Heart left ventricle (tissue), 16 donors: ENCODE measurements at regions of chr20 and their contacts with region 1.

Region 1: GRCh38 chr20:61588411-61589386 is 336.6 kb downstream of the CDH4 start:
- DNase-seq: peak in 1 of 5 donors; percentile 19
- ATAC-seq: no peak
- H3K4me3 ChIP-seq: no peak overlapping the region
- H3K27ac ChIP-seq: no peak overlapping the region
- H3K4me1 ChIP-seq: peaks cover 0 to 10% (median 0%) of the 10 kb centered on the region in 12 donors
- H3K27me3 ChIP-seq: peaks cover 0 to 21% (median 3%) of the 10 kb centered on the region in 9 donors
- CTCF ChIP-seq: no peak
- POLR2A ChIP-seq: no peak

Region 2: GRCh38 chr20:60167812-60168211 is 1420.9 kb before region 1 on chr20:
- intact Hi-C with region 1: no loop called
- DNase-seq: no peak
- ATAC-seq: no peak
- H3K4me3 ChIP-seq: no peak overlapping the region
- H3K27ac ChIP-seq: no peak overlapping the region
- H3K4me1 ChIP-seq: peaks cover 0 to 6% (median 0%) of the 10 kb centered on the region in 12 donors
- H3K27me3 ChIP-seq: no peaks in the 10 kb centered on the region
- CTCF ChIP-seq: no peak
- POLR2A ChIP-seq: no peak

Region 3: DNA sequence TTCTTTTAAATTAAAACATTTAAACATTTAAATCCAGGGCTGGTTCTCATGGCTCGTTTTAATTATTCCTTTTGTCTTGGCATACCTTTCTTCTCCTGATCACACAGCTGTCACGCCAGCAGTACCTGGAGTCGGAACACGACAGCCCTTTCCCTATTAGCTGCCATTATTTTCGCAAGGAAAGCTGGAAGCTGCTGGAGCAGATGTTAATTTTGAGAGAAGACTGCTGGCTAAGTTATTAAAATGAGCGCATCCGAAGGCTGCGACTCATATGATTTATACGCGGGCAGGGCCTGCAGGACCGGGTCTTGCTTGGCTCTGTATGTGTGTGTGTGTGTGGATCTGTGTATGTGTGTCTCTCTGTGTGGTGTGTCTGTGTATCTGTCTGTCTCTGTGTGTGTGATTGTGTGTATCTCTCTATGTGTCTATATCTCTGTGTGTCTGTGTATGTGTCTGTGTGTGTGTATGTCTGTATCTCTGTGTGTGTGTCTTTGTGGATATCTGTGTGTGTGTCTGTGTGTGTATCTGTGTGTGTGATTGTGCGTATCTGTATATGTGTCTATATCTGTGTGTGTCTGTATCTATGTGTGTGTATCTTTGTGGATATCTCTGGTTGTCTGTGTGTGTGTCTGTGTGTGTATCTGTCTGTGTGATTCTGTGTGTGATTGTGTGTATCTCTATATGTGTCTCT is 145.1 kb before region 1 on chr20:
- intact Hi-C with region 1: no loop called
- DNase-seq: no peak
- ATAC-seq: no peak
- H3K4me3 ChIP-seq: no peak overlapping the region
- H3K27ac ChIP-seq: no peak overlapping the region
- H3K4me1 ChIP-seq: no peaks in the 10 kb centered on the region
- H3K27me3 ChIP-seq: peaks cover 0 to 12% (median 0%) of the 10 kb centered on the region in 9 donors
- CTCF ChIP-seq: no peak
- POLR2A ChIP-seq: no peak

Region 4: GRCh38 chr20:61516346-61517215 is 72.1 kb before region 1 on chr20:
- intact Hi-C with region 1: loop called in 1 of 10 experiments (anchors 10 kb)
- DNase-seq: peak in 3 of 5 donors; percentile 29 to 72 (median 40)
- ATAC-seq: peak; percentile 85 to 94 (median 92)
- H3K4me3 ChIP-seq: no peak overlapping the region
- H3K27ac ChIP-seq: peak overlapping the region in 3 of 12 donors; percentile 46 to 60 (median 59)
- H3K4me1 ChIP-seq: peaks cover 0 to 5% (median 0%) of the 10 kb centered on the region in 12 donors
- H3K27me3 ChIP-seq: peaks cover 0 to 7% (median 0%) of the 10 kb centered on the region in 9 donors
- CTCF ChIP-seq: no peak
- POLR2A ChIP-seq: no peak

Region 5: GRCh38 chr20:61662226-61662967 is 73.7 kb after region 1 on chr20:
- intact Hi-C with region 1: no loop called
- DNase-seq: no peak
- ATAC-seq: no peak
- H3K4me3 ChIP-seq: no peak overlapping the region
- H3K27ac ChIP-seq: no peak overlapping the region
- H3K4me1 ChIP-seq: peaks cover 0 to 14% (median 0%) of the 10 kb centered on the region in 12 donors
- H3K27me3 ChIP-seq: peaks cover 0 to 5% (median 0%) of the 10 kb centered on the region in 9 donors
- CTCF ChIP-seq: no peak
- POLR2A ChIP-seq: no peak

Region 6: DNA sequence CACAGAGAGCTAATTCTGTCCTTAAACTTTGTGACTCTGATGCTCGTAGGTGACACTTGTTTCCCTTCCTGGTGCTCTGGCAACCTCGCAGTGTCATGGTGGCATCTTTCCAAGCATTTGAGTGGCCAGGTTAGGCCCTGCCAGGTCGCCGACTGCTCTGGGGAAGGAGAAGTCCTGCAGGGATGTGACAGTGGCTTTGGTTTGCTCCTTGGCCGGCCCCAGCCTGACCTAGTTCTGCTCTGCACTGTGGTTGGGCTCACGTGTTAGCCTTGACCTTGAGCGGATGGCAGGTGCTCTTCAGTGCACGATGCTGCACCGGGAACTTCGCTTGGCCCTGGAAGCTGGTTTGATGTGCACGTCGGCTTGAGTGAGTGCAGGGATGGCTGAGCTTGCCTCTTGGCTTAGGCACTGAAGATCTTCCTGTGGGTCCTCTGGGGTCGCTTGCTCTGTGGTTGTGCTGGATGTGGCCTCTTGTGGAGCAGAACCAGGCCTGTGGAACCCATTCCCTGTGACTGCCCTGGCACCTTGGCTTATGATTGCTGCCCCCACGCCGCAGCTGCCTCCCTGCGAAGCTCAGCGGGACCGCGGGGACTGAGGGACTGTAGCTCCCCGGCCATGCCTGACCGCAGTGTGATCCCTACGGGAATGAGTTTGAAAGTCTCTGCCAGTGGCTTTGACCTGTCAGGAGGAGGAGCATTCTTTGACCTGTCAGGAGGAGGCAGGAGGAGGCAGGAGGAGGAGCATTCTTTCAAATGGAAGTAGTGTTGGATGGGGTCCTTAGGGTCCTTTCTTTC is 658.4 kb after region 1 on chr20:
- intact Hi-C with region 1: no loop called
- DNase-seq: peak in 4 of 5 donors; percentile 61 to 85 (median 74)
- ATAC-seq: peak; percentile 75 to 88 (median 84)
- H3K4me3 ChIP-seq: no peak overlapping the region
- H3K27ac ChIP-seq: peak overlapping the region in 11 of 12 donors; percentile 24 to 86 (median 62)
- H3K4me1 ChIP-seq: peaks cover 0 to 81% (median 52%) of the 10 kb centered on the region in 12 donors
- H3K27me3 ChIP-seq: no peaks in the 10 kb centered on the region
- CTCF ChIP-seq: no peak
- POLR2A ChIP-seq: no peak